Dendritic cell treated with granulocyte-macrophage colony-stimulating factor and Interleukin-4, amounts not matched to agents 40 ng/mL and 50 ng/mL, for 4 days (primary cell): ENCODE measurements at regions of chr11 and their contacts with region 1.

Region 1: DNA sequence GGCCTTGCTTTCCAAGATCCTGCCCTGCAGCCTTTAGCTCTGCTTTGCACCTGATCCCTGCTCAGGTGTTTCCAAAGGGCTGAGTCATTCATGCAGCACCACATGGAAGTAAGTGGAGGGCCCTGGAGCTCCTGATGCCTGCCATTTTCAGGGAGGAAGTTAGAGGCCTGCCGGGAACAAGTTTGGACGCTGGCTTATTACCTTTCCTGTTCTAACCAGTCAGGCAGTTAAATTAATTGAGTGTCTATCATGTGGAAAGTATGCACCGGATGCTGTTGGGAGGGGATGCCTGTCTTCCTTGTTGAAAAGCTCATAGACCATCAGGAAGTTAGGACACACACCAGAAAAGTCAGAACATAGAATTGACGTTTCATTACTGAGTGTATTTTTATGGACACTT is 73.7 kb upstream of the PLET1 start:
- H3K4me3 Mint-ChIP-seq: no peak overlapping the region
- H3K27ac Mint-ChIP-seq: no peak overlapping the region
- H3K4me1 Mint-ChIP-seq: peaks cover 14% of the 10 kb centered on the region
- H3K27me3 Mint-ChIP-seq: no peaks in the 10 kb centered on the region

Region 2: GRCh38 chr11:112382561-112382960 is 48.2 kb after region 1 on chr11:
- intact Hi-C with region 1: loop called (anchors 5 kb)
- H3K4me3 Mint-ChIP-seq: no peak overlapping the region
- H3K27ac Mint-ChIP-seq: no peak overlapping the region
- H3K4me1 Mint-ChIP-seq: no peaks in the 10 kb centered on the region
- H3K27me3 Mint-ChIP-seq: peaks cover 3% of the 10 kb centered on the region

Region 3: DNA sequence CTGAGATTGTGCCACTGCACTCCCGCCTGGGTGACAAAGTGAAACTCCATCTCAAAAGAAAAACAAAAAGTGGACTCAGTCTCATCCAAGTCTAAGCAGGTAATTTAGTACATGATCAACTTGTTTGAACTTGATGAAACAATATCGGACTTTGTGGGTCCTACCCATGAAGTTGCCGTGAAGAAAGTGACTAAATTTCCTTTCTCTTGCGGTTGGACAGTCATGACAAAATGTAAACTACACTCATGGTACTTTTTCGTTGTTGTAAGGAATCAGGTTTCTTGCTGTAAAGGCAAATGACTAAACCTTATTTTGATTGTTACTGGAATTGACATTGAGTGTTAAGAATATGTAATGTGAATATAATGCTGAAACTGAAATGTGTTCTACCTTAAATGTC is 90.7 kb after region 1 on chr11:
- intact Hi-C with region 1: no loop called
- H3K4me3 Mint-ChIP-seq: no peak overlapping the region
- H3K27ac Mint-ChIP-seq: no peak overlapping the region
- H3K4me1 Mint-ChIP-seq: no peaks in the 10 kb centered on the region
- H3K27me3 Mint-ChIP-seq: no peaks in the 10 kb centered on the region